ENCODE measurements at regions of chr13 and their contacts with region 1.

Region 1: DNA sequence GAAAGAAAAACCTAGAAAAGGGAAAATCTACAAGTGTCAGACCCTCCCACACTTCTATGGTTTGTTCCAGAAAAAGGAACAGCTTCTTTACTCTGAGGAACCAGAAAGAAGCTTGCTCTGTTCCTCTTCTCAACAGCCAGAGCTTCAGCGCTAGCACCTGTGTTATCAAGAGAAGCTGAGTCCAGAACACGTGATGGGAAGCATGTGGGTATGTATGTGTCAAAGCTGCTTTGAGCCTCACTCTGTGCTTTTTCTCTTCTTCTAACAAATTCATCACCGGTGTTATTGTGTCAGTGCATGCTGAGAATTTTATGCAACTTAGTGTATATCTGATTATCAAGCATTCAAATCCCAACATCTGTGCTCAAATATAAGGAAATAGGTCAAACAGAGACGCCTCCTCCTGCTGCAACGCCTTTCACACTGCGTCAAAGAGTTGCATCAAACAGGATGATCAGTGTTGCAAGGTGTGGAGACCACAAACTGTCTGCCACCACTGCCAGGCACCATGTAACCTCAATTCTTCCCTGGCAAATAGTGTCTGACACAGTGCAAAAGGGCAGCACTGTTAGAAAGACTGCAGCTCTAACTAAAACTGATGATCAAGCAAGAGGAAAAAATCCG is 83.9 kb downstream of the LRRC63 start:
- DNase-seq: peak; percentile 48
- ATAC-seq: peak; percentile 90
- H3K4me3 Mint-ChIP-seq: peak overlapping the region; percentile 70
- H3K27ac Mint-ChIP-seq: peak overlapping the region; percentile 97
- H3K4me1 Mint-ChIP-seq: peaks cover 36% of the 10 kb centered on the region
- H3K27me3 Mint-ChIP-seq: no peaks in the 10 kb centered on the region

Region 2: GRCh38 chr13:46313432-46314257 is 18.0 kb after region 1 on chr13:
- POLR2A ChIA-PET with region 1: interaction called, 17 read pairs
- DNase-seq: no peak
- ATAC-seq: peak; percentile 67
- H3K4me3 Mint-ChIP-seq: peak overlapping the region; percentile 72
- H3K27ac Mint-ChIP-seq: peak overlapping the region; percentile 95
- H3K4me1 Mint-ChIP-seq: peaks cover 18% of the 10 kb centered on the region
- H3K27me3 Mint-ChIP-seq: no peaks in the 10 kb centered on the region

Region 3: GRCh38 chr13:46321494-46322225 is 26.1 kb after region 1 on chr13:
- POLR2A ChIA-PET with region 1: interaction called, 17 read pairs
- DNase-seq: peak; percentile 73
- ATAC-seq: peak; percentile 75
- H3K4me3 Mint-ChIP-seq: peak overlapping the region; percentile 76
- H3K27ac Mint-ChIP-seq: peak overlapping the region; percentile 87
- H3K4me1 Mint-ChIP-seq: peaks cover 21% of the 10 kb centered on the region
- H3K27me3 Mint-ChIP-seq: no peaks in the 10 kb centered on the region